ENCODE measurements at regions of chr19 and their contacts with region 1.

Region 1: GRCh38 chr19:49468746-49469447 is 5.1 kb upstream of the FLT3LG start:
- DNase-seq: peak; percentile 94
- H3K4me3 Mint-ChIP-seq: peak overlapping the region; percentile 75
- H3K27ac Mint-ChIP-seq: peak overlapping the region; percentile 99
- H3K4me1 Mint-ChIP-seq: peaks cover 32% of the 10 kb centered on the region
- H3K27me3 Mint-ChIP-seq: no peaks in the 10 kb centered on the region

Region 2: DNA sequence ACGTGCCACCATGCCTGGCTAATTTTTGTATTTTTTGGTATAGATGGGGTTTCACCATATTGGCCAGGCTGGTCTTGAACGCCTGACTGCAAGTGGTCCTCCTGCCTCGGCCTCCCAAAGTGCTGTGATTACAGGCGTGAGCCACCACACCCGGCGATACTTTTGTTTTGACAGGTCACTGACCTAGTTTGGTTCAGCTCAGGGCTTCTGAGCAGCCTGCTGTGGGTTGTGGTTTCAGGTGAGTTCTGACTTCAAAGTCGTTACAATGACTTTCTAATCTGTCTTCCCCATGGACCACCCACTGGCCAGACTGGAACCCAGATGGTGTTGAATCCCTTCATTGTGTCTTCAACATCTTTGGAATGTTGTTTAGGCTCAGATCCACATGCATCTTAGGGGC is 237.5 kb before region 1 on chr19:
- intact Hi-C with region 1: no loop called
- DNase-seq: no peak
- H3K4me3 Mint-ChIP-seq: no peak overlapping the region
- H3K27ac Mint-ChIP-seq: no peak overlapping the region
- H3K4me1 Mint-ChIP-seq: peaks cover 5% of the 10 kb centered on the region
- H3K27me3 Mint-ChIP-seq: no peaks in the 10 kb centered on the region

Region 3: GRCh38 chr19:49391581-49392399 is 77.1 kb before region 1 on chr19:
- intact Hi-C with region 1: loop called (anchors 1 kb)
- DNase-seq: peak; percentile 65
- H3K4me3 Mint-ChIP-seq: no peak overlapping the region
- H3K27ac Mint-ChIP-seq: no peak overlapping the region
- H3K4me1 Mint-ChIP-seq: peaks cover 7% of the 10 kb centered on the region
- H3K27me3 Mint-ChIP-seq: peaks cover 5% of the 10 kb centered on the region

Region 4: GRCh38 chr19:49443366-49444099 is 25.4 kb before region 1 on chr19:
- intact Hi-C with region 1: loop called (anchors 1 kb)
- DNase-seq: peak; percentile 92
- H3K4me3 Mint-ChIP-seq: peak overlapping the region; percentile 78
- H3K27ac Mint-ChIP-seq: peak overlapping the region; percentile 82
- H3K4me1 Mint-ChIP-seq: peaks cover 33% of the 10 kb centered on the region
- H3K27me3 Mint-ChIP-seq: peaks cover 37% of the 10 kb centered on the region

Region 5: DNA sequence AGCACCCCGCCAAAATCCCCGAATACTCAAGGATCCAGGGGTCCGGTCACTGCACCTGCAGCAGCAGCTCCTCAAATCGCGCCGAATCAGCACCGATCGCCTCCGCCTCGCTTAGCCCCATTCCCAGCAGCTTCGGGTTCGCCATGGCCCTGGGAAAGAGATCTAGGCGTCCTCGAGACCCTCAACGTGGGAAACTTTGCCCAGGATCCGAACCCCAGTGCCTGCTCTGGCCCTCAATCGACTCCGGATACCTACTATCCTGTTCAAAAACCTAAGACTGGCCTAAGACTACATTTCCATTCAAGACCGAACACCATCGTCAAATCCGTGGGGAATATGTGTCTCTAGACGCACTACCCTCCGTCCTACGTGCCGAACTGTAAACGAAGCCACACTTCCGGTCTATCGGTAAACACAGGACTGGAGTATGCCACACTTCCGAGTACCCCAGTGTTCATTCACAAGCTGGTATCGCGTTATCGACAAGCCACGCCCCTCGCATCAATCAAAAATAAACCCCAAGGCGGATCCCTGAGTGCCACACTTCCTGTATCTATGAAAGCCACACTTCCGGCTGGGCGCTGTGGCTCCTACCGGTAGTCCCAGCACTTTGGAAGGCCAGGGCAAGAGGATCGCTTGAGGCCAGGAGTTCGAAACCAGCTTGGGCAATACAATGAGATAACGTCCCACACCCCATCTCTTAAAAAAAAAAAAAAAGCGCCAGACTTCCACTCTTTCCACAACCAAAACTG is 17.3 kb before region 1 on chr19 and contains the start of gene PIH1D1:
- intact Hi-C with region 1: loop called (anchors 1 kb)
- DNase-seq: peak; percentile 95
- H3K4me3 Mint-ChIP-seq: peak within 1 kb of the TSS; percentile 99
- H3K27ac Mint-ChIP-seq: peak within 1 kb of the TSS; percentile 100
- H3K4me1 Mint-ChIP-seq: peaks cover 30% of the 10 kb centered on the region
- H3K27me3 Mint-ChIP-seq: no peaks in the 10 kb centered on the region
- total RNA-seq, gene PIH1D1: 136 and 138 TPM in 2 replicates

Region 6: GRCh38 chr19:49580264-49581006 is 111.5 kb after region 1 on chr19 and contains the start of gene NOSIP:
- intact Hi-C with region 1: no loop called
- DNase-seq: peak; percentile 93
- H3K4me3 Mint-ChIP-seq: peak within 1 kb of the TSS; percentile 94
- H3K27ac Mint-ChIP-seq: peak within 1 kb of the TSS; percentile 87
- H3K4me1 Mint-ChIP-seq: peaks cover 17% of the 10 kb centered on the region
- H3K27me3 Mint-ChIP-seq: no peaks in the 10 kb centered on the region
- total RNA-seq, gene NOSIP: 64.8 and 67.1 TPM in 2 replicates

Measured in activated T-helper 2 cell treated with anti-CD3 and anti-CD28 coated beads, Interferon-gamma antibody, Interleukin-2, Interleukin-4, amounts not matched to agents 10 μg/mL and 5 μg/mL and 100 μg/mL, durations not matched to agents 14 hours and 24 hours and 36 hours (primary cell).